ENCODE measurements at regions of chrX and their contacts with region 1.

Region 1: DNA sequence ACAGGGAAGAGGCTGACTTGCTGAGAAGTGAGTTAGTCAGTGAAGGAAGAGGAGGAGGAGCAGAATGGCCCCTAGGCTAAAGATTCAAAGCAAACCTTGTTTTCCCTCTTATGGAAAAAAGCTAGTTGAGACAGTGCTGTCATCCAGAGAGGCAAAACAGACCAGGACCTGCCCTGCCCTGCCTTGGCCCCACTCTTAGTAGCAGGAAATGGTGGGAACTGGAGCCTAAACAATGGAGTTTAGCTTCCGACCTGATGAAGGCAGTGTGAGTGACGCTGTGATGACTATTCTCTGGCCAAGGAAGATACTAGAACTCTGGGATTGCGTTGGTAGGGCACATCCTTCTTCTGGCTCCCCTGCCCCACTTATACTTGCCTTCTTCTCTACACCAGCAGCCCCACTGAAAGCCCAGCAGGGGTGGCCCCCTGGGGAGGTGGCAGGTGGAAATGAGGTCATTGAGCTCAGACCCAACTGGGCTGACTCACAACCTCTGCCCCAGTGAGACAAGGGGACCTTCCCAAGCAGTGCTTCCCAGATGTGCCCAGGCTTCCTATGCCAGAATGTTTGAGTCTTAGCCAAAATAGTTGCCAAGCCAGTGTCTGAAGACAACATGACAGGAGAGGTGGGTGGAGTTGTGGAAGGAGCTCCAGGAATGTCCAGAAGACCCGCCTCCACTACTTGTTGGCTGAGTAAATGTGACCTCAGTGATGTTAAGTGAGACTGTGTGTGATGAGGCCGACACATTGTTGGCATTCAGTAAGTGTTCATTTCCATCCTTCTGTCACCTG is 38.8 kb downstream of the MSN start:
- DNase-seq: peak in 1 of 9 donors; percentile 46
- ATAC-seq: peak; percentile 66
- H3K4me3 ChIP-seq: no peak overlapping the region
- H3K4me3 Mint-ChIP-seq: peak overlapping the region in 9 of 10 donors; percentile 64 to 79 (median 72)
- H3K27ac ChIP-seq: peak overlapping the region; percentile 64
- H3K27ac Mint-ChIP-seq: peak overlapping the region; percentile 75 to 96 (median 89)
- H3K4me1 ChIP-seq: peaks cover 50 to 52% of the 10 kb centered on the region in 2 donors
- H3K4me1 Mint-ChIP-seq: peaks cover 33 to 78% (median 67%) of the 10 kb centered on the region in 7 donors
- H3K27me3 ChIP-seq: no peaks in the 10 kb centered on the region
- H3K27me3 Mint-ChIP-seq: no peaks in the 10 kb centered on the region

Region 2: DNA sequence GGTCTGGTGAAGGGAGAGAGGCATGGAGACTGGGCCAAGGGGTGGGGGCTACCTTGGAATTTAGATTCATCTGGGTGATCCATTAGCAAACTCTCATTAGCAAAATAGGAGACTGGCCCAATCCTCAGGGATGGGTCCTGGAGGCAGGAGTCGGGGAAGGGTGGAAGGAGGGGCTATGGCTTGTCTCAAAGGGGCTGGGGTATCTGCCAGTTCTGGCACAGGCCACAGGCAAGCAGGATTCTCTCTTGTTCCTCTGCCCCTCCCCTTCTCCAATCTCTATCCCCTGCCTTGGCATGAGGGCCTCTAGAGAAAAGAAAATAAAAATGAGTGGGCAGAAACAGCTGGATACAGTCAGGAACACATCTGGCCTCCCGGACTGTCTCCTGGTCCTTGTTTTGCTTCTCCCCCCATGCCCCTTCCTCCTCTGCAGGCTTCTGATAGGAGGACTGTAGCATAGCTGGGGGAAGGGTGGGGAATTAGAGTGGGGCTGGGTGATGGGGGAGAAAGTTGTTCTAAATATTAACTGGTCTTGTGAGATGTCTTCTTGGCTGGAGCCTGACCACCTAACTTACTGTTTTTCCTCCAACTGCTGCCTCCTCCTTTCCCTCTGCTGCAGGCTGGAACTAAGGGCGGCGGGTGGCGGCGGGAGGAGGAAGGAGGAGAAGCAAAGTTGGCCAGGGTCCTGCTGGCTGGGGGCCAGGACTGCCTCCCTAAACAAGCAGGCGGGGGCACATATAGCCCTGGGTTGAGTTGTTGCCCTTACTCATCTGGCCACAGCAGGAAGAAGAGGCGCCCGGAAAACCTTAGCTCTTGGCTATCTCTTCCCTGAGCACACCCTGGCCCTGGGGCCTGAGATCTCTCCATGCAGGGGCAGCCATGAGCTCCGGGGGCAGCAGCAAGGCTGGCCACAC is 118.4 kb before region 1 on chrX:
- CTCF ChIA-PET with region 1: no interaction called
- POLR2A ChIA-PET with region 1: no interaction called
- intact Hi-C with region 1: no loop called
- DNase-seq: no peak
- ATAC-seq: no peak
- H3K4me3 ChIP-seq: no peak overlapping the region
- H3K4me3 Mint-ChIP-seq: no peak overlapping the region
- H3K27ac ChIP-seq: no peak overlapping the region
- H3K27ac Mint-ChIP-seq: no peak overlapping the region
- H3K4me1 ChIP-seq: no peaks in the 10 kb centered on the region
- H3K4me1 Mint-ChIP-seq: peaks cover 0 to 9% (median 0%) of the 10 kb centered on the region in 7 donors
- H3K27me3 ChIP-seq: no peaks in the 10 kb centered on the region
- H3K27me3 Mint-ChIP-seq: no peaks in the 10 kb centered on the region

Region 3: GRCh38 chrX:65677954-65678469 is 28.2 kb before region 1 on chrX:
- CTCF ChIA-PET with region 1: interaction called, 10 read pairs
- POLR2A ChIA-PET with region 1: interaction called, 3 read pairs
- intact Hi-C with region 1: no loop called
- DNase-seq: no peak
- ATAC-seq: no peak
- H3K4me3 ChIP-seq: no peak overlapping the region
- H3K4me3 Mint-ChIP-seq: peak overlapping the region; percentile 41 to 94 (median 71)
- H3K27ac ChIP-seq: no peak overlapping the region
- H3K27ac Mint-ChIP-seq: peak overlapping the region in 8 of 9 donors; percentile 23 to 88 (median 82)
- H3K4me1 ChIP-seq: peaks cover 66 to 82% of the 10 kb centered on the region in 2 donors
- H3K4me1 Mint-ChIP-seq: peaks cover 40 to 95% (median 85%) of the 10 kb centered on the region in 7 donors
- H3K27me3 ChIP-seq: no peaks in the 10 kb centered on the region
- H3K27me3 Mint-ChIP-seq: no peaks in the 10 kb centered on the region

Region 4: GRCh38 chrX:65723706-65724105 is 17.5 kb after region 1 on chrX:
- CTCF ChIA-PET with region 1: interaction called, 4 read pairs
- POLR2A ChIA-PET with region 1: interaction called, 4 read pairs
- intact Hi-C with region 1: loop called in 1 of 2 experiments (anchors 2 kb)
- DNase-seq: peak in 3 of 9 donors; percentile 16 to 50 (median 20)
- ATAC-seq: peak; percentile 59
- H3K4me3 ChIP-seq: no peak overlapping the region
- H3K4me3 Mint-ChIP-seq: peak overlapping the region; percentile 22 to 75 (median 60)
- H3K27ac ChIP-seq: peak overlapping the region; percentile 66
- H3K27ac Mint-ChIP-seq: peak overlapping the region; percentile 41 to 92 (median 84)
- H3K4me1 ChIP-seq: peaks cover 54 to 68% of the 10 kb centered on the region in 2 donors
- H3K4me1 Mint-ChIP-seq: peaks cover 45 to 95% (median 86%) of the 10 kb centered on the region in 7 donors
- H3K27me3 ChIP-seq: no peaks in the 10 kb centered on the region
- H3K27me3 Mint-ChIP-seq: no peaks in the 10 kb centered on the region